Activated T-helper 2 cell treated with anti-CD3 and anti-CD28 coated beads, Interferon-gamma antibody, Interleukin-2, Interleukin-4, amounts not matched to agents 10 μg/mL and 5 μg/mL and 100 μg/mL, durations not matched to agents 14 hours and 24 hours and 36 hours (primary cell): ENCODE measurements at regions of chr6 and their contacts with region 1.

Region 1: DNA sequence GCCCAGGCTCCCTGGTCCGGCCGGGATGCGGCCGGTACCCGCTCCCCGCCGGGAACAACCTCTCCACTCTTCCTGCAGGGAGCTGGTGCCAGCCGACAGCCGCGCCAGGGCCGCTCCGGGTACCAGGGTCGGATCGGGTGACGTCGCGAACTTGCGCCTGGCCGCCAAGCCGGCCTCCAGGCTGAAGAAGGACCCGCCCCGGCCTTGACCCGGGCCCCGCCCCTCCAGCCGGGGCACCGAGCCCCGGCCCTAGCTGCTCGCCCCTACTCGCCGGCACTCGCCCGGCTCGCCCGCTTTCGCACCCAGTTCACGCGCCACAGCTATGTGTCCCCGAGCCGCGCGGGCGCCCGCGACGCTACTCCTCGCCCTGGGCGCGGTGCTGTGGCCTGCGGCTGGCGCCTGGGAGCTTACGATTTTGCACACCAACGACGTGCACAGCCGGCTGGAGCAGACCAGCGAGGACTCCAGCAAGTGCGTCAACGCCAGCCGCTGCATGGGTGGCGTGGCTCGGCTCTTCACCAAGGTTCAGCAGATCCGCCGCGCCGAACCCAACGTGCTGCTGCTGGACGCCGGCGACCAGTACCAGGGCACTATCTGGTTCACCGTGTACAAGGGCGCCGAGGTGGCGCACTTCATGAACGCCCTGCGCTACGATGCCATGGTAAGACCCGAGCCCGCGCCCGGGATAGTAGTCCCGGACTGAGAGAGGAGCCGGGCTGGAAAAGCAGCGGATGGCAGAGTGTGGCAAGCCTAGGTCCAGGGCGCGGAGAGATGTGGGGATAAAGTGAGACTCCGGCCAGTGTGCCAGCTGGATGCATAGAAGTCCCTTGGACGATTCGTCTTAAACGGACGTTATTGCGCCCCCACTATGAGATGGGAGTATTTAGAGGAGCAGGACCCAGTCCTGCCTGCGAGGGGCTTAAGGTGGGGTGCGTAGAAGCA is at the start of gene NT5E:
- DNase-seq: peak; percentile 47
- H3K4me3 Mint-ChIP-seq: peak within 1 kb of the TSS; percentile 96
- H3K27ac Mint-ChIP-seq: peak within 1 kb of the TSS; percentile 88
- H3K4me1 Mint-ChIP-seq: peaks cover 63% of the 10 kb centered on the region
- H3K27me3 Mint-ChIP-seq: peaks cover 18% of the 10 kb centered on the region
- total RNA-seq, gene NT5E: 15.4 and 16.4 TPM in 2 replicates

Region 2: DNA sequence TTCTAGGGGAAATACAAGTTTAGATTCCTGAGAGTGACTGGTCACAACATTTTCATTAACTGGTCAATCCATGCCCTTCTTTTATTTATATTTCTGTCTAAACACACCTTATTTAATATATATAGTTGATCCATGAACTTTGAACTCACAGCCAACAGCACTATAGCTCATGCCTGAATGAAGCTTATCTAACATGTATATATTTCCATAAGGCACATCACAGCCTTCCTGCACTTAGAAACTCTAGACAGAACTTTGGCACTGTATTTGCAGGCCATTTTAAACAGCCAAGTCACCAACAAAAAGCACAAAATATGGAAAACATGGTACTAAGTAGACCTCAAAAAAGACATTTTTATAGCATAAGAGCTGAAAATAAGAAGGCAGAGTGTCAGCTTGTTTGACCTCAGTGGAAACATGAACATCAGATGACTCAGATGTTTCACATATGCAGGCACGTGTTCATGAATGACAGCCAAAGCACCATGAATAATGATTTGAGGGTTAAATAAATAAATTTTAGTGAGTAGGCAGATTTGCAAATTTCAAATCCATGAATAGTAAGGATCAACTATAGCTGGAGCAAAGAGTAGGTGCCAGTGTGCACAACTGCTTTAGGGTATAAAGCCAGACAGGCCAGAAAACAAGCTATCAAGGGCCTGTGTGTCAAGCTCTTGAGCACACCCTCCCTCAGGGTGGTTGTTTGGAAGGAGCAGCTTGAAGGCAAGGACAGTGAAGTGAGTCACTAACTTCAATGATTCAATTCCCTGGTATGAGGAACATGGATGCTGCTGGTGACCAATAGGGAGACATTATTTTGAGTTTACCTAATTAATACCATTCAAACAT is 89.1 kb before region 1 on chr6:
- intact Hi-C with region 1: loop called (anchors 2 kb)
- DNase-seq: no peak
- H3K4me3 Mint-ChIP-seq: no peak overlapping the region
- H3K27ac Mint-ChIP-seq: peak overlapping the region; percentile 34
- H3K4me1 Mint-ChIP-seq: peaks cover 13% of the 10 kb centered on the region
- H3K27me3 Mint-ChIP-seq: no peaks in the 10 kb centered on the region

Region 3: GRCh38 chr6:85482905-85483700 is 33.0 kb after region 1 on chr6:
- intact Hi-C with region 1: loop called (anchors 1 kb)
- DNase-seq: peak; percentile 74
- H3K4me3 Mint-ChIP-seq: no peak overlapping the region
- H3K27ac Mint-ChIP-seq: peak overlapping the region; percentile 58
- H3K4me1 Mint-ChIP-seq: peaks cover 12% of the 10 kb centered on the region
- H3K27me3 Mint-ChIP-seq: no peaks in the 10 kb centered on the region